ENCODE measurements at regions of chr17 and their contacts with region 1.

Region 1: GRCh38 chr17:64572638-64573154 is 65.9 kb downstream of the CEP95 start:
- DNase-seq: no peak
- H3K4me3 Mint-ChIP-seq: no peak overlapping the region
- H3K27ac Mint-ChIP-seq: peak overlapping the region; percentile 83
- H3K4me1 Mint-ChIP-seq: peaks cover 11% of the 10 kb centered on the region
- H3K27me3 Mint-ChIP-seq: no peaks in the 10 kb centered on the region

Region 2: GRCh38 chr17:64554028-64554637 is 18.6 kb before region 1 on chr17:
- CTCF ChIA-PET with region 1: no interaction called
- POLR2A ChIA-PET with region 1: no interaction called
- intact Hi-C with region 1: no loop called
- DNase-seq: no peak
- H3K4me3 Mint-ChIP-seq: no peak overlapping the region
- H3K27ac Mint-ChIP-seq: peak overlapping the region; percentile 8
- H3K4me1 Mint-ChIP-seq: no peaks in the 10 kb centered on the region
- H3K27me3 Mint-ChIP-seq: no peaks in the 10 kb centered on the region

Region 3: GRCh38 chr17:64599187-64599676 is 26.5 kb after region 1 on chr17:
- CTCF ChIA-PET with region 1: no interaction called
- POLR2A ChIA-PET with region 1: no interaction called
- intact Hi-C with region 1: loop called (anchors 2 kb)
- DNase-seq: peak; percentile 78
- H3K4me3 Mint-ChIP-seq: peak overlapping the region; percentile 61
- H3K27ac Mint-ChIP-seq: peak overlapping the region; percentile 74
- H3K4me1 Mint-ChIP-seq: peaks cover 26% of the 10 kb centered on the region
- H3K27me3 Mint-ChIP-seq: no peaks in the 10 kb centered on the region

Measured in activated CD4-positive, alpha-beta memory T cell treated with anti-CD3 and anti-CD28 coated beads for 36 hours (primary cell).